Heart right ventricle (tissue), 16 donors: ENCODE measurements at regions of chr12 and their contacts with region 1.

Region 1: GRCh38 chr12:130961921-130962451 is 8.3 kb downstream of the ADGRD1 start:
- DNase-seq: peak; percentile 72 to 85
- ATAC-seq: peak; percentile 86 to 96 (median 90)
- H3K4me3 ChIP-seq: no peak overlapping the region
- H3K27ac ChIP-seq: peak overlapping the region; percentile 7 to 81 (median 65)
- H3K4me1 ChIP-seq: peaks cover 3 to 48% (median 28%) of the 10 kb centered on the region in 9 donors
- H3K27me3 ChIP-seq: no peaks in the 10 kb centered on the region
- CTCF ChIP-seq: peak in 1 of 9 donors; percentile 17

Region 2: GRCh38 chr12:131002216-131002631 is 40.2 kb after region 1 on chr12:
- intact Hi-C with region 1: loop called in 3 of 10 experiments (anchors 2 to 5 kb)
- DNase-seq: no peak
- ATAC-seq: peak; percentile 18 to 84 (median 67)
- H3K4me3 ChIP-seq: no peak overlapping the region
- H3K27ac ChIP-seq: peak overlapping the region; percentile 18 to 86 (median 70)
- H3K4me1 ChIP-seq: peaks cover 0 to 40% (median 29%) of the 10 kb centered on the region in 9 donors
- H3K27me3 ChIP-seq: no peaks in the 10 kb centered on the region
- CTCF ChIP-seq: no peak

Region 3: DNA sequence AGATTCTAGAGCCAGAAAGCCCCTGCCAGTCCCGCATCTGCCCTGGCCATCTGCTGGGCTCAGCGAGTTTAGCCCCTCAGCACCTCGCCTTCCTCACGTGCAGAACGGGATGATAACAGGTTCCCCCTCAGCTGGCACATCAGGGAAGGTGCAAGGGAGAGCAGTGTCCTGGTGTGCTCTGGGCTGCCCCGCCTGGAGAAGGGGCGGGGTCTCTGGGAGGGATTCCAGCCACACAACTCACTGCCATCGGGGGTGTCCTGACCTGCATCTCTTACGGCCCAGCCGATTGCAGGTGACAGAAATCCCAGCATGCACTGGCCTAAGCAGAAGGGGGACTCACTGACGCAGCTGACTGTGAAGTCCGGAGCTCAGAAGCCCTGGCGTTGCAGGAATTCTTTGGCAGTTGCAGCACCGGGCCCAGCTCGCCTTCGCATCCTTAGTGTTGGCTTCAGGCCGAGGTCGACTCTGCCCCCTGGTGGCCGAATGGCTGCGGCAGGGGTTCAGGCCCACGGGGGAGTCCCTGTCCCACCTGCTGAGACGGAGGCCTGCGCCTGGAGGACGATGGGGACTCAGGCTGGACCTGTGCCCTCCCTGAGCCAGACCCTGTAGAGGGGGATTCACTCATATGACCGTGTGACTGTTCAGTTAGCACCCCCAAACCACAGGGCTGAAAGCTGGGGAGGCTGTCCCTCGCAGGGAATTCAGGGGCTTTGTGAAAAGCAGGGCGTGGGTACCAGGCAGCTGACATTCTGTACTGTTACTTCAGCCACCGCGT is 170.3 kb after region 1 on chr12:
- intact Hi-C with region 1: no loop called
- DNase-seq: peak; percentile 69 to 76
- ATAC-seq: peak; percentile 46 to 90 (median 78)
- H3K4me3 ChIP-seq: no peak overlapping the region
- H3K27ac ChIP-seq: peak overlapping the region in 3 of 10 donors; percentile 14 to 19 (median 15)
- H3K4me1 ChIP-seq: peaks cover 7 to 18% (median 12%) of the 10 kb centered on the region in 9 donors
- H3K27me3 ChIP-seq: no peaks in the 10 kb centered on the region
- CTCF ChIP-seq: peak; percentile 61 to 90 (median 83)

Region 4: DNA sequence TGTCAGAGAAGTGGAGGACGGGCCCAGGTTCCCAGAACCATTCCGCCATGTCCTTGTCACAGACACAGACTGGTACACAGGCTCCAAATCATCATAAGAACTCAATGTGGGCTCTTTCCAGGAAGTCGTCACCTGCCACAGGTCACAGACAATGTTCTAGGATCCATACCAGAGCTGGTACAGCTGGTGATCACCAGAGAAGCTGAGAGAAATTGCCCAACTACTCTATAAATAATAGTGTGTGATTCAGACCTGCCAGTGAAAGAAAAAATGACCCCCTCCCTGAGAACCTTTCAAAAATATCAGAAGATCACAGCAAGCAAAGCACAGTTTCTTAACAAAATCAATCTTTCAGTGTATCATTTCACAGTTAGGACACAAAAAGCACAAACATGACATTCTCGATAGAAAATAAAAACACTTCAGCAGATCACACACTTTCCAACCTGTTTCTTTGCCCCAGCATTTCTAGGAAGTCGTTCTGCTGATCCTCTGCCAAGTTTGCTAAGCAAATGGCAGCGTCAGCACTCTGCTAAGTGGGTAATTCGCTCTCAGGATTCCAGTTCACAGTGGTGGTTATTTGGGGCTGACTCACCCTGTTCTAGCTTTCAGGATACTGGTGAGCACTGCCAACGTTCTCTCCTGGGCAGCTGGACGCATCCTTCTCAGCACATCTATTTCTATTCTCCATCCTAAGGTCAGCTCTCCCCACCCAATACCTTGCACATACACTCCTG is 525.6 kb after region 1 on chr12:
- intact Hi-C with region 1: no loop called
- DNase-seq: no peak
- ATAC-seq: peak in 4 of 8 donors; percentile 21 to 89 (median 45)
- H3K4me3 ChIP-seq: no peak overlapping the region
- H3K27ac ChIP-seq: peak overlapping the region in 1 of 10 donors; percentile 19
- H3K4me1 ChIP-seq: peaks cover 0 to 8% (median 0%) of the 10 kb centered on the region in 9 donors
- H3K27me3 ChIP-seq: peaks cover 0 to 10% (median 4%) of the 10 kb centered on the region in 7 donors
- CTCF ChIP-seq: no peak